Dendritic cell treated with granulocyte-macrophage colony-stimulating factor and Interleukin-4, amounts not matched to agents 40 ng/mL and 50 ng/mL, for 4 days (primary cell): ENCODE measurements at regions of chr1 and their contacts with region 1.

Region 1: GRCh38 chr1:244319283-244320132 is 132.2 kb downstream of the ADSS2 start:
- H3K4me3 Mint-ChIP-seq: peak overlapping the region; percentile 49
- H3K27ac Mint-ChIP-seq: peak overlapping the region; percentile 97
- H3K4me1 Mint-ChIP-seq: peaks cover 38% of the 10 kb centered on the region
- H3K27me3 Mint-ChIP-seq: no peaks in the 10 kb centered on the region

Region 2: GRCh38 chr1:244302889-244303613 is 16.5 kb before region 1 on chr1:
- intact Hi-C with region 1: loop called (anchors 2 kb)
- H3K4me3 Mint-ChIP-seq: no peak overlapping the region
- H3K27ac Mint-ChIP-seq: peak overlapping the region; percentile 87
- H3K4me1 Mint-ChIP-seq: peaks cover 58% of the 10 kb centered on the region
- H3K27me3 Mint-ChIP-seq: no peaks in the 10 kb centered on the region

Region 3: DNA sequence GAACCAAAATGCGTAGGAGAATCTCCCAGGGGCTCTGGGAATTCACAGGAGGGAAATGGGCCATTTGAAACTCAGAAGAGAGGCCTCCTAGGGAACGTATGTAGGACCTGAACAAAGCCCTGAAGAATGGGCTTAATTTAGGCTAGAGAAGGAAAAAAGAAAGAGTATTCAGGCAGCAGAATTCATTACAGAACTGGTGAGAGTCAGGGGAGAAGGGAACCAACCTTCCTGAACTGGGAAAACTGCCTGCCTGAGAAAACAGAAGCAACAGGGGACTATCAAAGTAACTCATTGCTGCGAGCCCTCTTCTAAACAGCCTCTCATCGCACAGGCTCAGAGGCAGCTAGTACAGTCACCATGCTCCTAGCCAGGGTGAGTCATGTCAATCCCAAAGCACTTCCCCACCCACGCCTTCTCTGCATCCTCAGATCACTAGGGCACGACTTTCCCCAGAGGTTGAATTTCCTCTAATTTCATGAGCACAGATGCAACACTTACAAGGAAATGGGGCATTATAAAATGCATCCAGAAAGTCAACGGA is 34.1 kb after region 1 on chr1:
- intact Hi-C with region 1: loop called (anchors 5 kb)
- H3K4me3 Mint-ChIP-seq: no peak overlapping the region
- H3K27ac Mint-ChIP-seq: peak overlapping the region; percentile 76
- H3K4me1 Mint-ChIP-seq: peaks cover 50% of the 10 kb centered on the region
- H3K27me3 Mint-ChIP-seq: no peaks in the 10 kb centered on the region

Region 4: DNA sequence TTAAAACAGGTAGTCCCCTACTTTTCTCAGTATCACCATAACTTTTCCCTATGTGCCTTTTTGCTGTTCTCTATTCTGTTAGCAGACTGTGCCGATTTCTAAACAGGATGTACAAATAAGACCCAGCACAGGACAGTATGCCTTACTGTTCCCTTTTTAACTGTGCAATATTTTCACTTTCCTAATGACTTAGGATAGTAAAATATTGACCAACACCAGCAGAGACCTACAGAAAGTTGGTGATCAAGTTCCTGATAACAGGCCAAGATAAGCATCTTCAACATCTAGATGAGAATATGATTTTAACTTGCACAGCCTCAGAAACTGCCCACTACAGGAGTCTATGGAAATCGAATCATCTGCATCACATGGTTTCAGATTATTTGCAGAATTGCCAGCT is 90.2 kb after region 1 on chr1:
- intact Hi-C with region 1: loop called (anchors 10 kb)
- H3K4me3 Mint-ChIP-seq: no peak overlapping the region
- H3K27ac Mint-ChIP-seq: no peak overlapping the region
- H3K4me1 Mint-ChIP-seq: peaks cover 16% of the 10 kb centered on the region
- H3K27me3 Mint-ChIP-seq: no peaks in the 10 kb centered on the region

Region 5: DNA sequence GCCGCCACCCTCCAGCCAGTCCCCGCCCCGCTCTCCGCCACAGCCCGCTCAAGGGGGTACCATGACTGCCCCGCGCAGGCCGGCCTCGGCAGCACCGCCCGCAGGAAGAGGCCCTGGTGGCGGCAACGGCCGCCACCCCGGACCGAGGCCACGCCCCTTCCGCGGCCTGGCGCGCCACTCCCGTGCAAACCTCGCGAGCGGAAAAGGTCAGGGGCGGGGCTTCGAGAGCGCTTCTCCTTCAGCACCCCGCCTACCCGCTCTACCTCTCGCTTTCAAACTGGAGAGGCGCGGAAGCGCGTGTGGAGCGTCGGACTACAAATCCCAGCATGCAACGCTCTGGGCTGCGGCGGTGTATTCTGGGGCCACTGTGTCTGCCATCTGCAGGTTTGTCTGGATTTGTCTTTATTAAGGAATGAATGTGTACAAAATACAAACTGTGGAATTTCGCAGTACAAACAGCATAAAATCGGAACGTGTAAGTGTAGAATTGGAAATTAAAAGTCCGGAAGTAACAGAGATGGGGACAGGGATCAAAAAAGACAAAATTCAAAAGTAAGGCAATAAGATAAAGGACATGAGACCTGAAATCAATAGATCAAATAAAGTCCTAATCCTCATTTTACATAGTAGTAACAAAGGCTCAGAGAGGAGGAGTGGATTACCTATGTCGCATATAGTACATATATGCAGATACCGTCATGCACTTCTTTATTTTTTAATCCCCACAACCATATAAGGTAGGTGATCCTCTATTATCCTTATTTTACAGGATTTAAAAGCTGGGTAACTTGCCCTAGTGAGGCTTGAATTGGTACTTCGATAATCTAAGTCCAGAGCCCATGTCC is 132.7 kb after region 1 on chr1:
- intact Hi-C with region 1: loop called (anchors 10 kb)
- H3K4me3 Mint-ChIP-seq: peak overlapping the region; percentile 95
- H3K27ac Mint-ChIP-seq: peak overlapping the region; percentile 94
- H3K4me1 Mint-ChIP-seq: peaks cover 29% of the 10 kb centered on the region
- H3K27me3 Mint-ChIP-seq: no peaks in the 10 kb centered on the region

Region 6: DNA sequence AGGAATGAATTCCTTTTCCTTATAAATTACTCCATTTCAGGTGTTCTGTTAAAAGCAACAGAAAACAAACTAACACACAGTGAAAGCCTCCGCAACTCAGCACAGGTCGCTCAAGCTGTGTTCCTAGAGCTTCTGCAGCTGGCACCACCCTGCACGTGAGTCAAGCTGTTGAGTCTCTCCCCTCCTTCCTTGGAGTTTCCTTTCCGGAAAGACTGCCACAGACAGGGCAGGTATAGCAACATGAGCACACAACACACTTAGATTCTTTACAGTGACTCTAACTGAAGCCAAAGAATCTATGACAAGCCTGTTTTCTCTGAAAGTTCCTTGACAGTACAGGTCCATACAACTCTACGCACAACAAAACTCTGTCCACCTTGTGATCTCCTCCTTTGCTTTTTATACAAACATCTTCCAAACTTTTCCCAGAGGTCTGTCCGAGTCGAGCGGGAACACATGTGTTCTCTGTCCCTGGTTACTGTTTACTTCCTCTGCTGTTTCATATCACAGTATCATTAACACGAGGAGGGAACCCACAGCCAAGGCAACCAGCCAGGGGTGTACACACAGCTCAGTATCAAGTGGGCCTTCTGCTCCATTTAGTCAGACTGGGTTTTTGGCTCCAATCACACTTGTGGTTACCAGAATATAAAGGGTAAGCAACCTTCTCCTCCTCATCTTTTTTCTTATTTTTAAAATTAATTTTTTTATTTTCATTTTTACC is 294.8 kb after region 1 on chr1:
- intact Hi-C with region 1: no loop called
- H3K4me3 Mint-ChIP-seq: no peak overlapping the region
- H3K27ac Mint-ChIP-seq: no peak overlapping the region
- H3K4me1 Mint-ChIP-seq: no peaks in the 10 kb centered on the region
- H3K27me3 Mint-ChIP-seq: no peaks in the 10 kb centered on the region